SK-N-SH (cell line): ENCODE measurements at regions of chr14 and their contacts with region 1.

Region 1: GRCh38 chr14:80996049-80996901 is 40.9 kb downstream of the TSHR start:
- DNase-seq: peak; percentile 50
- H3K4me3 ChIP-seq: peak overlapping the region in 1 of 2 experiments; percentile 36; a peak in 1 of 4 replicates
- H3K27ac ChIP-seq: no peak overlapping the region
- H3K4me1 ChIP-seq: no peaks in the 10 kb centered on the region
- H3K27me3 ChIP-seq: peaks cover 8% of the 10 kb centered on the region; the same call in 1 of the 2 replicates
- CTCF ChIP-seq: peak; percentile 80
- EP300 ChIP-seq: no peak
- RAD21 ChIP-seq: peak; percentile 65

Region 2: DNA sequence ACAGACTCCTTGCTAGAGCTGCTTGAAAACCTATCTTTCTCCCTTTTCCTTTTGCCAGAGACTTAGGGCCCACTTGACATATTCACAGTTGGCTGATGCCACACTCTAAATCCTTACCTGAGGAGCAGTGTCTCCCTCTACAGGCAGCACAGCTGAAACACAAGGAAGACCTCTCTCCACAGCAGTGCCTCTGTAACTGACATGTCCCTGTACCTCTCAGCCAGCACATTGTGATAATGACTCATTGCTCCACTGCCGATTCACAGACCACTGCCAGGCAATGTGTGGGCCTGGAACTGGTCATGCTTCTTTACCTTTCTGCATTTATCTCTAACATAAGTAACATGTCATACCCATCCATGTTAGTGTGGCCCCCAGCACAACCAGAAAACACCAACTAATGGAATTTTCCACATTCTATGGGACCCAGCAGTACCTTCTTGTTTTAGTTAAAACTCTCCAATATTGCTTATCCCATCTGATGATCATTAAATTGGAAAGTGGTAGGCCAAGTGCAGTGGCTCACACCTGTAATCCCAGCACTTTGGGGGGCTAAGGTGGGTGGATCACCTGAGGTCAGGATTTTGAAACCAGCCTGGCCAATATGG is 168.0 kb after region 1 on chr14:
- CTCF ChIA-PET with region 1: interaction called, 29 read pairs
- POLR2A ChIA-PET with region 1: interaction called, 3 read pairs
- DNase-seq: peak; percentile 46
- H3K4me3 ChIP-seq: no peak overlapping the region
- H3K27ac ChIP-seq: no peak overlapping the region
- H3K4me1 ChIP-seq: no peaks in the 10 kb centered on the region
- H3K27me3 ChIP-seq: no peaks in the 10 kb centered on the region
- CTCF ChIP-seq: peak; percentile 77
- EP300 ChIP-seq: no peak
- RAD21 ChIP-seq: peak; percentile 75